Dorsolateral prefrontal cortex (tissue), 120 donors: ENCODE measurements at regions of chr22 and their contacts with region 1.

Region 1: DNA sequence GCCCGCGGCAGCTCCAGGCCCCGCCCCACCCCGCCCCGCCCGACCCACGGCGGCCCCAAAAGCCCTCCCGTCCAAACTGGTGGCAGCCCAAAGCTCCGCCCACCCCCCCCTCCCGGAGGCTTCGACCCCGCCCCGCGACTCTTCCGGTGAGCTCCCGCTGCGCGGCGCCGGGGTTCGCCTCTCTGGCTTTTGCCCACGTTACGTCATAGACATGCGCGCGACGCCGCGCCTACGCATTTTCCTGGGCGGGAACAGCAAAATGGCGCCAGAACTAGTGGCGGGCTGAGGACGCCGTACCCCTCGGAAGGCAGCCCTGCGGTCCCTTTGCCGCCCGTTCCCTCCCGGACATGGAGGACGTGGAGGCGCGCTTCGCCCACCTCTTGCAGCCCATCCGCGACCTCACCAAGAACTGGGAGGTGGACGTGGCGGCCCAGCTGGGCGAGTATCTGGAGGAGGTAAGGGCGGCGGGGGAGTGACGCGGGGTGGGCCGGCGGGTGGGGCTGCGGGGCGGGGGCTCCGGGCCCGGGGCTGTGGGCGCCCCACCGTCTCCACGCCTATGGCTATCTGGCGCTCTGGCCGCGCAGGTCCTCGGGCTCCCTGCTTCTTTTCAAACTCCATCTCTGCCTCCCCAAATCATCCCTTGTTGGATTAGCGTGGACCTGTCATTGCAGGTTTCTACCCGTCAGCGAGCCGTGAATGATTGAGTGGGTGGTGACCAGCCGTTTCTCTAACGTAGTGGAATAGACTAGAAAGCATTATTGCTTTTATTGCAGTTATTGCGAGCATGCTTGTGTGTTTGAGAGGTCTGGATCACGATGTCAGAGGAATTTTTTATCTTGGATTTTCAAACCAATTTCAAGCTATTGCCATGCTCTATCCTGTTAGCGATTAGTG is at the start of gene NCAPH2:
- DNase-seq: peak; percentile 92 to 99 (median 96)
- H3K4me3 ChIP-seq: peak within 1 kb of the TSS; percentile 72 to 100 (median 92)
- H3K27ac ChIP-seq: peak within 1 kb of the TSS; percentile 34 to 95 (median 85)
- H3K27me3 ChIP-seq: no peaks in the 10 kb centered on the region
- CTCF ChIP-seq: peak in 12 of 56 donors; percentile 2 to 32 (median 16)
- total RNA-seq, gene NCAPH2: 47.2 to 83.2 (median 61.5) TPM

Region 2: DNA sequence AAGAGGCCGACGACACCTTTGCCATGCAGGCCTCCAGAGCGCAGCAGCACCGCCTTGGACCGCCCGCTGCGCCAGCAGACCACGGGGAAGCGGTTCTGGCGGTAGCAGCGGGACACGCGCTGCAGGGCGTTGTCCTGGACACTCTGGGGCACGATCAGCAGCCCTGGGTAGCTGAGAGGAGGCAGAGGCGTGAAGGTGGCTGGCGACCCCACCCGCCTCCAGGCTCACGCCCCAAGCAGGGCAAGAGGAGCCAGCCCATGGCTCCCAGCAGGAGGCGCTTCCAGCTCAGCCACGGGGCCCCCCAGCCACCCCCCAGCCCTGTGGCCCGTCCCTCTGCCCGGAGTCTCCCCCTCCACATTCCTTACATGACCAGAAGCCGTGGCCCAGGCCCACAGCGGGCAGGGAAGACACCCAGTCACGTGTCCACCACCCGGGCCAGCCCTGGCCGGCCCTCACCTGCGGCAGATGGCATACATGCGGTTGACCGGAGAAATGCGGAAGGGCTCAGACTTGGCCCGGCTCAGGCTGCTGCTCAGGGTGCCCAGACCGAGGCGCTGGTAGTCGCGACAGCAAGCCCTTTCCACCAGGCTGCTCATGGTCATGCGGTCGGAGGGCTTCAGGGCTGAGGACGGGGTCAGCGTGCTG is 48.6 kb before region 1 on chr22:
- intact Hi-C with region 1: no loop called
- DNase-seq: peak in 1 of 10 donors; percentile 94
- H3K4me3 ChIP-seq: no peak overlapping the region
- H3K27ac ChIP-seq: peak overlapping the region in 1 of 59 donors; percentile 85
- H3K27me3 ChIP-seq: no peaks in the 10 kb centered on the region
- CTCF ChIP-seq: no peak

Region 3: DNA sequence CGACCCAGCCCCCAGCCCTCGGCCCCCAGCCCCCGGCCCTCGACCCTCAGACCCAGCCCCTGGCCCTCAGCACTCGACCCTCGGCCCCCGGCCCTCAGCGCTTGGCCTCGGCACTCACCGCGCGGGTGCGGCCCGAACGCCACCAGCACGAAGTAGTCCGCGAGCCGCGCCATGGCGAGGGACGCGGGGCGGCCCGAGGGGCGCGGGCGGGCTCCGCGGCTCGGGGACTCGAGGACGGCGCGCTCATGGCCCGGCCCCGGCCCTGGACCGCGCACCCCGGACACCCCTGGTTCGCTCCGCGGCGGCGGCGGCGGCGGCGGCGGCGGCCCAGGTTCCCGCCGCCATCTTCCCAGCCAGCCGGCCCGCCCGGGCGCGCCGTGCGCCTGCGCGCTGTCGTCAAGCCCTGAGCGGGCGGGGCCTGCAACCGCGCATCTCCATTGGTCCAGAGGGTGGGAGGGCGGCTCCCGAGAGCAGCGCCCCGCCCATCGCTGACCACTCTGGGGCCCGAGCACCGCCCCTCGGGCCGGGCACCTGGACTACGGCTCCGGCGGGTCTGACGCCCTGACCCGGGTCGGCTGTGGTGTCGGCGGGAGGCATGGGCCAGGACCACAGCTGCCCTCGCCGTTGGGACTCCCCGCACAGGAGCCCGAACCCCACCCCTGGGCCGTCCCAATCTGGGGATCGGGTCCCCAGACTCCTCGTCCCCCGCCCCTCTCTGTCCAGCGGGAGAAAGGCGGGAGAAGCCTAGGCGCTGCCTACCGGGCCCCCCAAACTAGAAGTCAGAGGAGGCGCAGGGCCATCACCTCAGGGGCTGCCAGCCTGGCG is 33.4 kb before region 1 on chr22 and contains the start of gene SBF1:
- intact Hi-C with region 1: loop called in 1 of 2 experiments (anchors 5 kb)
- DNase-seq: peak; percentile 84 to 96 (median 92)
- H3K4me3 ChIP-seq: peak within 1 kb of the TSS; percentile 53 to 97 (median 86)
- H3K27ac ChIP-seq: peak within 1 kb of the TSS in 56 of 59 donors; percentile 16 to 95 (median 75)
- H3K27me3 ChIP-seq: peaks cover 0 to 13% (median 0%) of the 10 kb centered on the region in 45 donors
- CTCF ChIP-seq: peak in 8 of 56 donors; percentile 8 to 32 (median 14)
- total RNA-seq, gene SBF1: 163 to 302 (median 210) TPM

Region 4: DNA sequence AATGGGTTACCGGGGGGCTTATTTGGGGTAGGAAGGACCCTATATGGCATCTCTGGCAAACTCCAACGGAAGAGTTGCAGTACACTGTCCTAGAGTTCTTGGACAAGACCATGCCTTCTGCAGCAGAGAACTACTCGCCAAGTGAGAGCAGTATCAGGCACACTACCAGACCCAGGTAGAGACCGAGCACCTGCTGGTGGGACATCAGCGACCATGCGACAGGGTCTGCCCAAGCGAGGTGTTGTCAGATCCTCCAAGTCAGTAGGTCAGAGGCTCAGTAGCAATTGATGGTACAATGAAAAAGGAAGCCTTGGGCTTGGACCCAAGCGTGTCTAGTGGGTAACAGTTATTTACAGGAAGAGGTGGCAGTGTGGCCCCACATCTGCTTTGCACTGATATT is 77.5 kb after region 1 on chr22:
- intact Hi-C with region 1: no loop called
- DNase-seq: peak in 2 of 10 donors; percentile 11 to 29
- H3K4me3 ChIP-seq: no peak overlapping the region
- H3K27ac ChIP-seq: no peak overlapping the region
- H3K27me3 ChIP-seq: no peaks in the 10 kb centered on the region
- CTCF ChIP-seq: no peak